ENCODE measurements at regions of chr11 and their contacts with region 1.

Region 1: DNA sequence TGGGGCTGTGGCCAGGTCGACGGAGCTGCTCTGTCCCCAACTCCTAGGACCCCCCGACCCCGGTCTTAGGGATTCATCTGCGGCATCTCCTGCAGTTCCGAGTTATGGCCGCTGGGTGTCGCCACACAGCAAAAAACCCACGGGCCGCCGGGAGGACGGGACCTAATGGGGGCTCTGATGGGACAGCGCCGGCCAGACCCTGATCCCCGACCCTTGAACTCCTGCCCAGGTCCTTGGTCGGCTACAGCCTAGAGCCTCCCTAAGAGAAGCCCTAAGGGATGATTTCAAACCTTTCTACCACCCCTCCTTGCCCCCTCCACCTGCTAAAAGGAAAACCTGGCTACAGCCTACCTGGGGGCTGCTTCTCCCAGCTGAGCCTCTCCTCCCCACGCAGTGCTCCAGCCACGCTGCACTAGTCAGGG is 30.8 kb upstream of the LRRC10B start:
- DNase-seq: peak; percentile 86
- ATAC-seq: peak; percentile 43
- H3K4me3 Mint-ChIP-seq: no peak overlapping the region
- H3K27ac Mint-ChIP-seq: no peak overlapping the region
- H3K4me1 Mint-ChIP-seq: peaks cover 29% of the 10 kb centered on the region
- H3K27me3 Mint-ChIP-seq: peaks cover 3% of the 10 kb centered on the region; the same call in 1 of the 2 replicates
- CTCF ChIP-seq: peak; percentile 95

Region 2: GRCh38 chr11:61446211-61446651 is 31.5 kb before region 1 on chr11:
- CTCF ChIA-PET with region 1: interaction called, 38 read pairs
- POLR2A ChIA-PET with region 1: no interaction called
- DNase-seq: peak; percentile 95
- ATAC-seq: peak; percentile 93
- H3K4me3 Mint-ChIP-seq: no peak overlapping the region
- H3K27ac Mint-ChIP-seq: peak overlapping the region; percentile 82; the same call in 1 of the 2 replicates
- H3K4me1 Mint-ChIP-seq: no peaks in the 10 kb centered on the region
- H3K27me3 Mint-ChIP-seq: no peaks in the 10 kb centered on the region
- CTCF ChIP-seq: peak; percentile 47

Region 3: GRCh38 chr11:61509043-61510029 is 31.6 kb after region 1 on chr11:
- CTCF ChIA-PET with region 1: interaction called, 552 read pairs
- POLR2A ChIA-PET with region 1: interaction called, 5 read pairs
- DNase-seq: peak; percentile 80
- ATAC-seq: peak; percentile 63
- H3K4me3 Mint-ChIP-seq: peak overlapping the region; percentile 48
- H3K27ac Mint-ChIP-seq: no peak overlapping the region
- H3K4me1 Mint-ChIP-seq: peaks cover 58% of the 10 kb centered on the region
- H3K27me3 Mint-ChIP-seq: peaks cover 59% of the 10 kb centered on the region
- CTCF ChIP-seq: no peak

Region 4: GRCh38 chr11:61541598-61541997 is 63.9 kb after region 1 on chr11:
- CTCF ChIA-PET with region 1: interaction called, 18 read pairs
- POLR2A ChIA-PET with region 1: no interaction called
- DNase-seq: peak; percentile 54
- ATAC-seq: peak; percentile 85
- H3K4me3 Mint-ChIP-seq: peak overlapping the region; percentile 22; the same call in 1 of the 2 replicates
- H3K27ac Mint-ChIP-seq: peak overlapping the region; percentile 60; the same call in 1 of the 2 replicates
- H3K4me1 Mint-ChIP-seq: peaks cover 47% of the 10 kb centered on the region
- H3K27me3 Mint-ChIP-seq: no peaks in the 10 kb centered on the region; the same call in 1 of the 2 replicates
- CTCF ChIP-seq: no peak

Region 5: GRCh38 chr11:61581030-61581928 is 103.5 kb after region 1 on chr11 and contains the start of gene SYT7:
- CTCF ChIA-PET with region 1: interaction called, 15 read pairs
- POLR2A ChIA-PET with region 1: no interaction called
- DNase-seq: peak; percentile 99
- ATAC-seq: peak; percentile 83
- H3K4me3 Mint-ChIP-seq: peak within 1 kb of the TSS; percentile 79
- H3K27ac Mint-ChIP-seq: no peak within 1 kb of the TSS
- H3K4me1 Mint-ChIP-seq: peaks cover 56% of the 10 kb centered on the region
- H3K27me3 Mint-ChIP-seq: peaks cover 61% of the 10 kb centered on the region
- CTCF ChIP-seq: no peak; the same call in 1 of the 2 replicates
- total RNA-seq, gene SYT7: 12.5 to 18.9 TPM (median 18.2 TPM) in 3 replicates